Gastrocnemius medialis (tissue), 4 donors: ENCODE measurements at regions of chr2 and their contacts with region 1.

Region 1: DNA sequence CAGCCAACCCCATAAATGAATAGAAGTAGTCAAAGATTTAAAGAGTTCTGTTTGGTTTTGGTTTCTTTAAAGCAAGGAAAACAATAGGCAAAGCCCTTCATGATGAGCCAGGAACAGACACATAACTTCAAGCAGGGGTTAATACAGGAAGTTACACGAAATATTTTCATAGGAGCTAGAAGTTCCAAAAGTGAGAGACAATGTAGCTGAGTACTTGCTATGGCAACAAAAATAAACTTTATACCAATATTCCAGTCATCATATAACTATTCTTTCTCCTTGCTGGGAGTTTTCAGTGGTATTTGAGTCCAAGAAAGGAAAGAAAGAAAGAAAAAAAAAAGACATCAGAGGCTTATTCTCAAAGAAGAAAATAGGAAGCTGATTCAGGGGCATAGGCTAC is 56.2 kb downstream of the COBLL1 start:
- DNase-seq: no peak
- ATAC-seq: no peak
- H3K4me3 ChIP-seq: no peak overlapping the region
- H3K27ac ChIP-seq: peak overlapping the region; percentile 52 to 68 (median 64)
- H3K4me1 ChIP-seq: no peaks in the 10 kb centered on the region
- H3K27me3 ChIP-seq: no peaks in the 10 kb centered on the region
- CTCF ChIP-seq: no peak
- POLR2A ChIP-seq: no peak

Region 2: DNA sequence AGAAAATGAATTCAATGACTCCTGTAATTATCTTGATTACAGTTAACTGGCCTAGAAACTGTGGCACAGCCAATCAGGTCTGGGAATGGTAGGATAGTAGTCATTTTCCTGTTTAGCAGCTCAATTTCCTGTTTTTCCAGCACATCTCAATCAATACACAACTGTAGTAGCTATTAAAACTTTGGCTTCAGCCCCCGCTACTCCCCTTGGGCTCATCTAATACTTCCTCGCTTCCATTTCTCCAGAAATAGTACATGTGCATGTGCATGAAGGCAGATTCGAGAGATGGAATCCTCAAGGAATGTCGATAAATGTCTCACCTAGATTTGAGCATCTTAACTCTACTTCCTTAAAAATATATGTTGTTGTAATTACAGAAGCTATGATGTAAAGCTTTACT is 46.4 kb after region 1 on chr2:
- in situ Hi-C with region 1: no loop called
- intact Hi-C with region 1: loop called (anchors 5 kb)
- DNase-seq: no peak
- ATAC-seq: no peak
- H3K4me3 ChIP-seq: no peak overlapping the region
- H3K27ac ChIP-seq: peak overlapping the region; percentile 37 to 67 (median 56)
- H3K4me1 ChIP-seq: peaks cover 0 to 7% of the 10 kb centered on the region in 2 donors
- H3K27me3 ChIP-seq: no peaks in the 10 kb centered on the region
- CTCF ChIP-seq: no peak
- POLR2A ChIP-seq: no peak

Region 3: GRCh38 chr2:165032559-165032958 is 247.1 kb after region 1 on chr2:
- in situ Hi-C with region 1: no loop called
- intact Hi-C with region 1: no loop called
- DNase-seq: no peak
- ATAC-seq: no peak
- H3K4me3 ChIP-seq: no peak overlapping the region
- H3K27ac ChIP-seq: no peak overlapping the region
- H3K4me1 ChIP-seq: no peaks in the 10 kb centered on the region
- H3K27me3 ChIP-seq: no peaks in the 10 kb centered on the region
- CTCF ChIP-seq: no peak
- POLR2A ChIP-seq: no peak